ENCODE measurements at regions of chr5 and their contacts with region 1.

Region 1: GRCh38 chr5:139501381-139501780 is 18.8 kb upstream of the STING1 start:
- DNase-seq: no peak
- ATAC-seq: no peak
- H3K4me3 ChIP-seq: no peak overlapping the region
- H3K27ac ChIP-seq: no peak overlapping the region
- H3K4me1 ChIP-seq: peaks cover 22% of the 10 kb centered on the region
- H3K27me3 ChIP-seq: no peaks in the 10 kb centered on the region; a peak in 1 of 5 replicates
- CTCF ChIP-seq: no peak
- EP300 ChIP-seq: no peak
- POLR2A ChIP-seq: no peak
- RAD21 ChIP-seq: no peak

Region 2: GRCh38 chr5:139385061-139386049 is 116.0 kb before region 1 on chr5:
- CTCF ChIA-PET with region 1: no interaction called
- POLR2A ChIA-PET with region 1: interaction called, 10 read pairs
- in situ Hi-C with region 1: no loop called
- intact Hi-C with region 1: no loop called
- DNase-seq: peak; percentile 73
- ATAC-seq: peak; percentile 73
- H3K4me3 ChIP-seq: peak overlapping the region; percentile 68 to 79 (median 76)
- H3K27ac ChIP-seq: peak overlapping the region; percentile 69
- H3K4me1 ChIP-seq: peaks cover 81% of the 10 kb centered on the region
- H3K27me3 ChIP-seq: no peaks in the 10 kb centered on the region; a peak in 1 of 5 replicates
- CTCF ChIP-seq: peak; percentile 93
- EP300 ChIP-seq: no peak
- POLR2A ChIP-seq: peak; percentile 30 to 68; a peak in 3 of 4 replicates
- RAD21 ChIP-seq: peak; percentile 64

Region 3: DNA sequence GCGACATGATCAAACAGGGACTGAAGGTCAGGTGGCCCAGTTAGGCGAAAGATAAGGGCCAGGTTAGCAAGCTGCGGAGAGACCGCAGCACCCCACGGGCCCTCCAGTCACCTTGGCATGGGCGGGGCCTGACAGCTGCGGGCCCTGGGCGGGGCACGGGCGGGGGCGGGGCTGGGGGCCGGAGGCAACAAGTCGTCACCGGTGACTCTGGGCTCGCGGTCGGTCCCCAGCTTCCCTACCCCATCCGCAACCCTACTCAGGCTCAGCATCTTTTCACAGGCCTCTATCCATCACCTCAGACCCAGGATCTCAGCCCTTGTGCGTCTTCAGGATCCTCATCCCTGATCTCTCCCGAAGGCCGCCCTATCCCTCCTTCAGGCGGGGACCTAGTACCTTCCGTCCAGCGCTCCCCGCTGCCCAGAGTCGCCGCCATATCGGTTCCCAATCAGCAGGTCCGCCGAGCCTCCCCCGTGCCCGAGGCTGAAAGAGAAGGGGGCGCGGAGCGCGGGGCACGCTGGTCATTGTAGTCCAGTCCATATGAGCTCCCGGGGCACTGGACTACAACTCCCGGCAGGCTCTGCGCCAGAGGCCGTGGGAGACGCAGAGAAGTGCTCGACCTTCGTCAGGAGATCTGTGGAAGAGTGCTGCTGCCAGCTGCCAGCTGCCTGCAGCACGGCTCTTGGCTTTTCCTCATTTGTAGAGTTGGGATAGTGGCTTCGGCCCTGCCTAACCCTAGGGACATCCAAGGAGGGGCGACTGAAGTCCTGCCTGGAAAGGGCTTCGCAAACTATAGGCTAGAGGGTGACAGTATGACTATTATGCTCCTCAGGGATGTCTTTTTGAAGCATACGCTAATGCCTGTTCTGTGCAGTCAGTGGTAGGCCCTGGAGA is 62.1 kb before region 1 on chr5 and contains the start of gene DNAJC18:
- CTCF ChIA-PET with region 1: no interaction called
- POLR2A ChIA-PET with region 1: interaction called, 52 read pairs
- in situ Hi-C with region 1: no loop called
- intact Hi-C with region 1: loop called (anchors 5 kb)
- DNase-seq: peak; percentile 81
- ATAC-seq: peak; percentile 97
- H3K4me3 ChIP-seq: peak within 1 kb of the TSS; percentile 89 to 98 (median 89)
- H3K27ac ChIP-seq: peak within 1 kb of the TSS; percentile 73
- H3K4me1 ChIP-seq: peaks cover 15% of the 10 kb centered on the region
- H3K27me3 ChIP-seq: 0 out of 5 replicates have a peak, but pooled peaks cover 0 to 7% of the 10 kb centered on the region in 2 experiments
- CTCF ChIP-seq: 0 out of 2 replicates have a peak, but pooled peaks have one; percentile 30
- EP300 ChIP-seq: no peak
- POLR2A ChIP-seq: peak; percentile 35 to 80; a peak in 3 of 4 replicates
- RAD21 ChIP-seq: 0 out of 2 replicates have a peak, but pooled peaks have one; percentile 19
- total RNA-seq, gene DNAJC18: 6.5 and 9.6 TPM in 2 replicates

Region 4: DNA sequence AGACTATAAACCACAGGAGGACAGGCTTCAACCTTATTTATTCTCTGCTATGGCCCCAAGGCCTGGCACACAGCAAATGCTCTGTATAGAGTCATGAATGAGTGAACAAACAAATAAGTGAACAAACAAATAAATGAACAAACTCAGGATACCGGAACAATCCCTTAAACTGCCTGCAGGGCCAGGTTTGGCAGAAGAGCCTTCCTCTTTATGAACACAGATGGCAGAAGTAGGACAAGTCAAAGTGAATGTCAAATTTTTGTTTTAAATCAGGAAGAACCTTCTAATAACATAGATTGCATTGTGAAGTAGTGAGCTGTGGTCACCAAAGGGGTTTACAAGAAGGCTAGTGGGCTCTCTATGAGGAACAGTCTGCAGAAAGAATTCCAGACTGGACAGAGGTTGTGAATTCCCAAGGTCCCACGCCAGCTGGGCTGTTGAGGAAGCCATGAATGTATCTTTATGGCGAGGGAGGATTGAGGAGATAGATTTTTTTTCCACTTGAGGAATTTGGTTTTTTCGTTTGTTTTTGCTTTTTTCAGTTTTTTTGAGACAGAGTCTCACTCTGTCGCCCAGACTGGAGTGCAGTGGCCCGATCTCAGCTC is 11.5 kb after region 1 on chr5:
- CTCF ChIA-PET with region 1: no interaction called
- POLR2A ChIA-PET with region 1: interaction called, 51 read pairs
- in situ Hi-C with region 1: no loop called
- intact Hi-C with region 1: no loop called
- DNase-seq: no peak
- ATAC-seq: no peak
- H3K4me3 ChIP-seq: no peak overlapping the region
- H3K27ac ChIP-seq: no peak overlapping the region
- H3K4me1 ChIP-seq: peaks cover 11% of the 10 kb centered on the region
- H3K27me3 ChIP-seq: no peaks in the 10 kb centered on the region; a peak in 1 of 5 replicates
- CTCF ChIP-seq: no peak
- EP300 ChIP-seq: no peak
- POLR2A ChIP-seq: no peak
- RAD21 ChIP-seq: no peak

Region 5: DNA sequence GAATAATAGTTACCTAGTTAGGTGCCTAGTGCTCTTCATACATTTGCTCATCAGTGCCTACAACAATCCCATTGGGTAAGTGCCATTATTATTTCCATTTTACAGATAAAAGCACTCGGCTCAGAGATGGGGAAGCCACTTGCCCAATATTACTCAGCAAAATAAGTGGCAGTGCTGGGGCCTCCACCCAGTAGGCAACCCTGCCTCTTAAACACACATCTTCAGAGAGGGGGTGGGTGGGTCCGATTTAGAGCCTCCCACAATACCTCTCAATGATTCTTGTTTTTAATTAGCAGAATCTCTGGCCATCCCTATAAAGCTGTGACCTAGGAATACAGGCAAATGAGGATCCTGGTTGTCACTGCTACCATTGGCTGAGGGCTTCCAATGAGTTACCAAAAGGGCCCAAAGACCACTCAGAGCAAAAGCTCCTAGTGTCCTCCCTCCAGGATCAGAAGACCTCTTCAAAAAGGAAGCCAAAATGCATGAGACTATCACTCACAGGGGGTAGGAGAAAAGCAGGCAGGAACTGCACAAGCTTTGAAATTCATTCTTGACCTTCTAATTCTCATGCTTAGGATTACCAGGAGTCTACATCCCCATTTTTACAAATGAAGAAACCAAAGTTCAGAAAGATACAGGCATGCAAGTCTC is 23.7 kb after region 1 on chr5:
- CTCF ChIA-PET with region 1: no interaction called
- POLR2A ChIA-PET with region 1: interaction called, 51 read pairs
- in situ Hi-C with region 1: no loop called
- intact Hi-C with region 1: no loop called
- DNase-seq: no peak
- ATAC-seq: peak; percentile 58
- H3K4me3 ChIP-seq: peak overlapping the region; percentile 49 to 73 (median 69)
- H3K27ac ChIP-seq: peak overlapping the region; percentile 60
- H3K4me1 ChIP-seq: peaks cover 74% of the 10 kb centered on the region
- H3K27me3 ChIP-seq: no peaks in the 10 kb centered on the region; a peak in 1 of 5 replicates
- CTCF ChIP-seq: no peak
- EP300 ChIP-seq: no peak
- POLR2A ChIP-seq: no peak
- RAD21 ChIP-seq: no peak

Region 6: DNA sequence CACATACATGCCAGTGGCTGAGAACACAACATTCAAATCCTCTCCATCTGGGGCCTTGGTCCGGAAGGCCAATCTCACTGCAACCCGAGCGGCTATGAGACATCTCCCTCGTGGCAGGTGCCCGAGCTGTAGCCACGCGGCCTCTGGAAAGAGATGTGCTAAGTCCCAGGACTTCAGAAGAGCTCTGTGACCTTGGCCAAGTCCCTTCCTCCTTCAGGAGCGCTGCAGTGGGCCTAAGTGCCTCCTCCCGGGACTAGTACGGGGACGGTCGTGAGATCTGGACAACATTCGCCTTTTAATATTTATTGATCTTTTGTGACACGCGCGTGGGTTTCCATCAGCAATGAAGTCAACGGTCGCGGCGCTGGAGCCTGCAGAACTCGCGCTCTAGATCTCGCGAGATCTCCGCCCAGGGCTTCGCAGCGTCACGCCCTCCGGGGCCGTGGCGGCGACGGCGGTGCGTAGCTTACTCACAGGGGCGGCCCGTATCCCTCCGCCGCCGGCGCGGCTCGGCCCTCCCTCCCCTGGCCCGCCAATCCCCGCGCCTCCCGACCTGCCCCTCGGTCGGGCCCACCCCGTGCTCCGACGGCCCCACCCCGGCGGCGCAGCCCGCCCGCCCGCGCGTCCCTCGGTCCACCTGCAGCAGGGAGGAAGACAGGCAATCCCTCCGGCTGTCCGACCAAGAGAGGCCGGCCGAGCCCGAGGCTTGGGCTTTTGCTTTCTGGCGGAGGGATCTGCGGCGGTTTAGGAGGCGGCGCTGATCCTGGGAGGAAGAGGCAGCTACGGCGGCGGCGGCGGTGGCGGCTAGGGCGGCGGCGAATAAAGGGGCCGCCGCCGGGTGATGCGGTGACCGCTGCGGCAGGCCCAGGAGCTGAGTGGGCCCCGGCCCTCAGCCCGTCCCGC is 59.6 kb after region 1 on chr5 and contains the start of gene UBE2D2:
- CTCF ChIA-PET with region 1: no interaction called
- POLR2A ChIA-PET with region 1: interaction called, 23 read pairs
- in situ Hi-C with region 1: no loop called
- intact Hi-C with region 1: no loop called
- DNase-seq: peak; percentile 90
- ATAC-seq: peak; percentile 94
- H3K4me3 ChIP-seq: peak within 1 kb of the TSS; percentile 91 to 98 (median 95)
- H3K27ac ChIP-seq: peak within 1 kb of the TSS; percentile 95
- H3K4me1 ChIP-seq: peaks cover 42% of the 10 kb centered on the region
- H3K27me3 ChIP-seq: no peaks in the 10 kb centered on the region; a peak in 1 of 5 replicates
- CTCF ChIP-seq: peak; percentile 10; the same call in 1 of the 2 replicates
- EP300 ChIP-seq: no peak
- POLR2A ChIP-seq: peak; percentile 78 to 84
- RAD21 ChIP-seq: no peak; the same call in 1 of the 2 replicates
- total RNA-seq, gene UBE2D2: 109 and 118 TPM in 2 replicates

Region 7: DNA sequence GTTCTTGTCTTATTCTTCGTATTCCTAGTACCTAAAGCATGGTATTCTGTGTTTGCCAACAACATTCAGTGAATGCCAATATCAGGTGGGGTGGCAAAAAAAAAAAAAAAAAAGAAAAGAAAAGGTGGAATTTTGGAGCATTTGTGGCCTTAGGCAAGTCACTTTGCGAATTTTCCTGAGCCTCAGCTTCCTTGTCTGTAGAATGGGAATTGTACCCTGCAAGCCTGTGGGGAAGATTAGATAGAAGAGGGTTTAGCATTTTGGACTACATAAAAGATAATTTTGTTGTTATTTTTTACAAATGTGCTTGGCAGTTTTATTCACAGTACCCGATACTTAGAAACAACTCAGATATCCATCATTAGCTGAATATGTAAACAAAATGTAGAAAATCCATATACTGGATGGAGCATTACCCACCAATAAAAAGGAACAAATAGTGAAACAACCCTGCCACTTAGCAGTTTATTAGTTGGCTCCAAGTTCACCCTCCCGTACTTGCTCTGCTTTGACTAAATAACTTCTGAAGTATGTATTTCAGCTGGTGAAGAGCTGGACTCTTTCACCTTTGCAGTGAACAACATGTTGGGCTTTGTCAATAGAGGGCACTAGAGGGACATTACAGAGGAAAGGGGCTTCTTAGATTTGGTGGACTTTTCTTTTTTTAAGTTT is 73.4 kb after region 1 on chr5:
- CTCF ChIA-PET with region 1: no interaction called
- POLR2A ChIA-PET with region 1: no interaction called
- in situ Hi-C with region 1: no loop called
- intact Hi-C with region 1: no loop called
- DNase-seq: peak; percentile 52
- ATAC-seq: peak; percentile 73
- H3K4me3 ChIP-seq: no peak overlapping the region
- H3K27ac ChIP-seq: peak overlapping the region; percentile 7
- H3K4me1 ChIP-seq: peaks cover 58% of the 10 kb centered on the region
- H3K27me3 ChIP-seq: no peaks in the 10 kb centered on the region
- CTCF ChIP-seq: peak; percentile 63
- EP300 ChIP-seq: no peak
- POLR2A ChIP-seq: no peak
- RAD21 ChIP-seq: no peak

Measured in HepG2 (cell line).